SK-N-SH (cell line): ENCODE measurements at regions of chr7 and their contacts with region 1.

Region 1: GRCh38 chr7:120987683-120988590 is 574 bp upstream of the CPED1 start:
- DNase-seq: peak; percentile 84
- H3K4me3 ChIP-seq: peak overlapping the region; percentile 49 to 62
- H3K27ac ChIP-seq: peak overlapping the region; percentile 70 to 73; a peak in 3 of 4 replicates
- H3K4me1 ChIP-seq: peaks cover 12 to 31% of the 10 kb centered on the region in 2 experiments; a peak in 3 of 4 replicates
- H3K27me3 ChIP-seq: no peaks in the 10 kb centered on the region
- CTCF ChIP-seq: peak; percentile 100
- EP300 ChIP-seq: 0 out of 4 replicates have a peak, but pooled peaks of 1 of the 2 experiments have one; percentile 36
- RAD21 ChIP-seq: peak; percentile 98

Region 2: GRCh38 chr7:120709972-120710320 is 278.0 kb before region 1 on chr7:
- CTCF ChIA-PET with region 1: no interaction called
- POLR2A ChIA-PET with region 1: no interaction called
- DNase-seq: no peak
- H3K4me3 ChIP-seq: no peak overlapping the region
- H3K27ac ChIP-seq: no peak overlapping the region
- H3K4me1 ChIP-seq: no peaks in the 10 kb centered on the region
- H3K27me3 ChIP-seq: no peaks in the 10 kb centered on the region
- CTCF ChIP-seq: no peak
- EP300 ChIP-seq: no peak
- RAD21 ChIP-seq: no peak

Region 3: DNA sequence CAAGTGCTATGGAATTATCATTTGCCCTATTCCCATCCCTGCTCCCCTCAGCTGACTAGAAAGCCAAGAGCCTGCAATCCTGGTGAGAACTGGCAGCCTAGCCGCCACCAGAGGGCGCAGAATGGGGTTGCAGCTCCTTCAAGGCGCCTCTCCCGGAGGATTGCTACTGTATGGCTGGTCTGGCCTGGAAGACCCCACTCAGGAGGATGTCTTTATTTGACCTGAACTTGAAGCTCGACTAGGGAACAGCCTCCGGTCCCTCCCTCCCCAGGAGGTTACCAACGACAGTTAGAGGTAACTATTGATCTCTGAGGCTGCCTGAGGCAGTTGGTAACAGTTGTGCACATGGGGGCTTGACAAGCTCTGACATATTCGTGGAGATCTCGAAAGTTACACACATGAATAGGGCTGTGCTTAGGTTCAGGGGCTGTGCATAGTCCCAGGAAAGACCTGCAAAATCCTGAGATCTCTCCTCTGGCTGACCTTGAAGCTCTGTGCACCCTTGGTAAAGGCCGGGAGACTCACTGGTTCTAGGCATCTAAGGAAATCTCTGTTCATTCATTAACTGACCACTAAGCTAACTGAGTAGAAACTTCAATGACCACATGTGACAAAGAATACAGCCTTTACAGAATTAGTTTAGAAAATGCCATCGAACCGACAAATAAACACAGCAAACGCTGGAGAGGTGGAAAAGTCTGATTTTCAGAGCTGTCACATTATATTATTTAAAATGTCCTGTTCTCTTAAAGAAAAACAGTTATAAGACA is 195.7 kb before region 1 on chr7:
- CTCF ChIA-PET with region 1: interaction called, 13 read pairs
- POLR2A ChIA-PET with region 1: no interaction called
- DNase-seq: peak; percentile 73
- H3K4me3 ChIP-seq: no peak overlapping the region; a peak in 1 of 4 replicates
- H3K27ac ChIP-seq: no peak overlapping the region
- H3K4me1 ChIP-seq: peaks cover 0 to 2% of the 10 kb centered on the region in 2 experiments; a peak in 1 of 4 replicates
- H3K27me3 ChIP-seq: peaks cover 15% of the 10 kb centered on the region; the same call in 1 of the 2 replicates
- CTCF ChIP-seq: peak; percentile 99
- EP300 ChIP-seq: no peak
- RAD21 ChIP-seq: peak; percentile 75

Region 4: DNA sequence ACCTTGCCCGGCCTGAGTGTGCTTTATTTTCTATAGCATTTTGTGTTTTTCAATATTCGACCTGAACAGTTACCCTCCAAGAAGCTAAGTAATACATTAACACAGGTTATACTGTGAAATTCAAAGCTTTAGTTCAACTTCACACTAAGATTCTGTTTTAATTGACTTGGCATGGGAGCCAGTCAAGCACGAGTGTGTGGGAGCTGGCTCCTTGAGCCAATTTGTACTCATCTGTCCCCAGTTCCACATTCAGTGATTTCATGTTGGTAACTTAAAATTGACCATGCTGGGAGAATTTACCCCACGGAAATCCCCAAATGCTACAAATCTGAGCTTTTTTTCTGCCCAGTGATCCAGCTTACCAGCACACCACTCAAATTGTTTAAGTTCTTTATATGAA is 150.3 kb before region 1 on chr7:
- CTCF ChIA-PET with region 1: no interaction called
- POLR2A ChIA-PET with region 1: no interaction called
- DNase-seq: no peak
- H3K4me3 ChIP-seq: no peak overlapping the region
- H3K27ac ChIP-seq: no peak overlapping the region
- H3K4me1 ChIP-seq: no peaks in the 10 kb centered on the region
- H3K27me3 ChIP-seq: no peaks in the 10 kb centered on the region
- CTCF ChIP-seq: no peak
- EP300 ChIP-seq: no peak
- RAD21 ChIP-seq: no peak

Region 5: DNA sequence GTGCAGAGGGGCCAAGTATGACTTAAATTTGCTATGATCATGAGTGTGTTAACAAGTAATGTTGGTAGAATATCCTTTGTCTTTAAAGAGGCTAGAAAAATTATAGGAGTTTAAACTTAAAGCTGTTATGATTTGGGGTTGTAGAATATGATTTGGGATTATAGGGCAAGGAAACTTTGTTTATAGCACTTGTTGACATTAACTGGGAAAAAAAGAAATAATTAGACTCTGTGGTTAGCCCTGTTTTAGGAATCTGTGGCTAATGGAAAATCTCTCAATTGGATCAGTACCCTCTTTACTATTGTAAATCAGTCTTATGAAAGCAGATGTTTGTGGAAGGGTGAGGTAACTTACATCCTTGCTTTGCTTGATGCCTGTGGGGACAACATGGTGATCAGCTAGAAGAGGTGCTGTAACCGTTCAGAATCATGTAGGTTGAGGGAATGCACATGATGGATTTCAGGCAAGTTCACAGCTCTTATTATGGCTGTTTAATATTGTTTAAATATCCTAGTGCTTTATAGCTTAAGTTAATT is 26.2 kb before region 1 on chr7:
- CTCF ChIA-PET with region 1: interaction called, 14 read pairs
- POLR2A ChIA-PET with region 1: no interaction called
- DNase-seq: no peak
- H3K4me3 ChIP-seq: no peak overlapping the region
- H3K27ac ChIP-seq: no peak overlapping the region
- H3K4me1 ChIP-seq: no peaks in the 10 kb centered on the region; a peak in 1 of 4 replicates
- H3K27me3 ChIP-seq: no peaks in the 10 kb centered on the region
- CTCF ChIP-seq: no peak
- EP300 ChIP-seq: no peak
- RAD21 ChIP-seq: no peak

Region 6: DNA sequence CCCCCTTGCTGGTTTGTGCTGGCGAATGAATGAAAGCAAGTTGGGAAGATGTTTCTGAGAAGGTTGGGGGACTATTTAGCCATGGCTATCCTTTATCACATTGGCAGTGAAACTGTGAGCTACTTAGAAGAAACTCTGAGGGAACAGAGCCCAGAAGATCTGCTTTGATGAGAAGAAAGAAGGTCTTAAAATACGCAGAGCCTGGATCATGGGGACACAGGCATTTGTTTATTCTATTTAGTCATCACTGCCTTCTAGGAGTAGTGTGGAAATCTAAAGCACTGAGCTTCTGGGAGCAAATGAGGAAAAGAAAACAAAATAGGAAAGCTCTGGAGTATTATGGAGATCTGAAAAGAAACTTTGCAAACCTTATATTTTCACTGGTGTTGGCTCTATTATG is 29.0 kb after region 1 on chr7:
- CTCF ChIA-PET with region 1: interaction called, 59 read pairs
- POLR2A ChIA-PET with region 1: no interaction called
- DNase-seq: no peak
- H3K4me3 ChIP-seq: no peak overlapping the region
- H3K27ac ChIP-seq: no peak overlapping the region
- H3K4me1 ChIP-seq: peaks cover 0 to 7% of the 10 kb centered on the region in 2 experiments; a peak in 3 of 4 replicates
- H3K27me3 ChIP-seq: no peaks in the 10 kb centered on the region
- CTCF ChIP-seq: no peak
- EP300 ChIP-seq: no peak
- RAD21 ChIP-seq: no peak

Region 7: DNA sequence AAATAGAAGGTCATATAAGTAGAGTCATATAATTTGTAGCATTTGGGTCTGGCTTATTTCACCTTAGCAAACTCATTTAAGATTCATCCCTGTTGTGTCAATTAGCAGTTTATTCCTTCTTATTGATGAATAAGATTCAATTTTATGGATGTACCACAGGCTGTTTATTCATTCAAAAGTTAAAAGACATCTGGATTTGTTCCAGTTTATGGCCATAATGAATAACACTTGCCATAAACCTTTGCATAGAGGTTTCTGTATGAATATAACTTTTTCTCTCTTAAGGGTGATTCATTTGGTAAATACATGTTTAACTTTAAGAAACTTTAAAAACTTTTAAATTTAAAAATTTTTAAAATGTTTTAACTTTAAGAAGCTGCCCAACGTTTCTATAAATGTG is 67.0 kb after region 1 on chr7:
- CTCF ChIA-PET with region 1: interaction called, 17 read pairs
- POLR2A ChIA-PET with region 1: no interaction called
- DNase-seq: no peak
- H3K4me3 ChIP-seq: no peak overlapping the region
- H3K27ac ChIP-seq: no peak overlapping the region
- H3K4me1 ChIP-seq: no peaks in the 10 kb centered on the region
- H3K27me3 ChIP-seq: no peaks in the 10 kb centered on the region
- CTCF ChIP-seq: no peak
- EP300 ChIP-seq: no peak
- RAD21 ChIP-seq: no peak

Region 8: DNA sequence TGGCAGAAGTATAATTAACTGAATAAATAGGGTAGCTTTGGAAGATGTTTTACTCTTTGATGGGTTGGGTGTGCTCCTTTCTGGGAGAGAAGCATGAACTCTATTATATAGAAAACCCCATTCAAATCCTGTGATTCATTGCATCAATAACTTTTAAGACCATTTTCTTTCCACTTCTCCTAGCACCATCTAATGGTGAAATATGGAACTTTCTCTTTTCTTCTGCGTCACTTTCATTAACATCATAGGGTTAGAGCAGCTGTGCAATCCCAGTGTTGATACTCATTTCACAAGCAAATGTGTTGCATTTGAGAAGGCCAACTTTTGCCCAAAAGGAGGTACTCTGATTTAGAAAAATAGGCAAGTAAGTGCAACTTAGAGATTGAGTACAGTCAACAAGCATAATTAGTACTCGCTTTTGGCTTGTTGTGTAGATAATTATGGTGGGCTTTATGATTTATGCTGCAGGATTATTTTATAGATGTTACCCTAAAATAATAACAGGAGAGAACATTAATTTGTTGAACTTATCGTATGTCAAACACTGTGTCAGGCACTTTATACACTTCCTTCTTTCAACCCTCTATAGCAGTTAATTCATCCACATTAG is 93.5 kb after region 1 on chr7:
- CTCF ChIA-PET with region 1: interaction called, 397 read pairs
- POLR2A ChIA-PET with region 1: interaction called, 7 read pairs
- DNase-seq: peak; percentile 45
- H3K4me3 ChIP-seq: no peak overlapping the region
- H3K27ac ChIP-seq: no peak overlapping the region
- H3K4me1 ChIP-seq: peaks cover 6 to 33% of the 10 kb centered on the region in 2 experiments
- H3K27me3 ChIP-seq: no peaks in the 10 kb centered on the region
- CTCF ChIP-seq: peak; percentile 91
- EP300 ChIP-seq: no peak
- RAD21 ChIP-seq: peak; percentile 95